ENCODE measurements at regions of chr1 and their contacts with region 1.

Region 1: DNA sequence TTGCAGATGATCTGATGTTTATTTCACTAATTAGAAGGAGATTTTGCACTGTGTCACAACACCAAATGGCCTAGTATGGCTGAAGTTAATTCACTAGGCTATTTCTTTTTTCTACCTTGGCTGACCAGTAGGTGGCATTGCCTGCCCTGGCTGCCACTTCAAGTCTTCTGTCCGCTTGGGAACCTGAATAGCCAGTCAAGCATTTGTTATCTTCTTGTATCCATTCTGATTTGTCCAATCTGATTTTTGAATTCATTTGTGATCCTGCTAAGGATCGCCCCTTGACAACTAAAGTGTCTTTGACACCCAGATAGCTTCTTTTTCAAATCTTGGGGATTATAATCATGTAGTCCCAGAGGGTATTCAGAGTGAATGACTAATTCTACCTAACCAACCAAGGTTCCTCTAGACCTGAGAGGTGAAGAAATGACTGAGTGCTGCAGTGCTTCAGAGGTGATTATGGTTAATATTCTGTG is 99.4 kb downstream of the GIPC2 start:
- DNase-seq: peak; percentile 50
- H3K4me3 Mint-ChIP-seq: no peak overlapping the region
- H3K27ac Mint-ChIP-seq: no peak overlapping the region
- H3K4me1 Mint-ChIP-seq: peaks cover 16% of the 10 kb centered on the region
- H3K27me3 Mint-ChIP-seq: no peaks in the 10 kb centered on the region

Region 2: DNA sequence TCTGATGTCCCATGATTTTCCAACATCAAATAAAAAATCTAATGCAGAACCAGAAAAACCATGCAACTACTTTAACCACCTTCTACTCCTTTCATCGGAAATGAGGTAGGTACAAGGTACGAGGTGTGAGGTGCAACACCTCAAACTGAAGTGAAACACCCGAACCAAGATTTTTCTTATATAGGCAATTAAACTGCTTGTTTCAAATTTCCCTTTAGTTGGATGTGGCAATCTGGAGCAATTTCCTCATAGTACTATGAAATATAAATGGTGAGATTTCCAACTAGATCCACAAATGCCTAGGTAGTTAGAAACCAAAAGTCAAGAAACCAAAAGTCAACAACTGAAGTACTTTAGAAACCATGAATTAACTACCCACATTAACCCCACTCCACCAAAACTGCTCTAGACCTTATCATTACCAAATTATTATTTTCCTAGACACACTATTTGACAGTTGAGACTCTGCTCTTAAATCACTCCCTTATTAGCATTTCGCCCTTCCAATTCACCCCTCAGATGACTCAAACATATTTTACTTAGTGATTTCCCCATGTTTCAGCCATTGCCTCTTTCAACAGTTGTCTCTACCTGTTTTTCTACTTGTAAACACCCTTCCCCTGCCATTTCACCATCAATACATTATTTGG is 204.1 kb before region 1 on chr1:
- CTCF ChIA-PET with region 1: no interaction called
- POLR2A ChIA-PET with region 1: no interaction called
- intact Hi-C with region 1: no loop called
- DNase-seq: no peak
- H3K4me3 Mint-ChIP-seq: no peak overlapping the region
- H3K27ac Mint-ChIP-seq: no peak overlapping the region
- H3K4me1 Mint-ChIP-seq: peaks cover 14% of the 10 kb centered on the region
- H3K27me3 Mint-ChIP-seq: no peaks in the 10 kb centered on the region

Region 3: GRCh38 chr1:78132174-78132947 is 12.8 kb before region 1 on chr1:
- CTCF ChIA-PET with region 1: interaction called, 31 read pairs
- POLR2A ChIA-PET with region 1: no interaction called
- intact Hi-C with region 1: no loop called
- DNase-seq: no peak
- H3K4me3 Mint-ChIP-seq: no peak overlapping the region
- H3K27ac Mint-ChIP-seq: no peak overlapping the region
- H3K4me1 Mint-ChIP-seq: no peaks in the 10 kb centered on the region
- H3K27me3 Mint-ChIP-seq: no peaks in the 10 kb centered on the region

Region 4: DNA sequence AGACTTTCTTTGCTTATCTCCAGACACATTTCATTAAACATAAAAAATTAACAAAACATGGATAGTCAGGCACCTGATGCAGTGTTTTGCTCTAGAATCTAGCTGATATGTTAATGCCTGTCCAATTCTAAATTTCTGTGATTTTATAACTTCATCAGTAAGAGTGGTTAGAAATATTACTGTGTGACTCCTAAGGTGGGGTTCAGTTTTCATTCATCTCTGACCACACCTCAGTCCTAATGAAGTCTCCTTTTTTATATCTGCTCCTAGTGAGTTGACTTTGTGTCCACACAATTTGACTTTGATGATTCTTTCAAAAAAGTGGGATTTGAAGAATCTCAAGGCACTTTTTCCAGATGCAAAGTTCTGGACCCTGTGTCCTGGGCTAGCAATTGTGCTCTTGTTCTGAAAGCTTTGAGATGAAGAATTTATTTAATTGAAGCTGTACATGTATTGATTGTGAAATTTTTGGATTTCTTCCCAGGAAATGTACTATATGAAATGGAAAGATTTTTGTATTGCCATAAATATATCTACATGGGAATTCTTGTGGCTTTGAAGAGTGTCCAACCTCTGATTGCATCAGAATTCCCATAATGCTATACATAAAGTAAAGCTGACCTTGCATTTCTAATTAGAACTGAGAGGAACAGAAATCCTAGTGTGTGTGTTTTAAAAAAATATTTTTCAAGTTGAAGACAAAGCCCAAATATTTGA is 11.8 kb after region 1 on chr1:
- CTCF ChIA-PET with region 1: interaction called, 12 read pairs
- POLR2A ChIA-PET with region 1: no interaction called
- intact Hi-C with region 1: no loop called
- DNase-seq: no peak
- H3K4me3 Mint-ChIP-seq: no peak overlapping the region
- H3K27ac Mint-ChIP-seq: no peak overlapping the region
- H3K4me1 Mint-ChIP-seq: no peaks in the 10 kb centered on the region
- H3K27me3 Mint-ChIP-seq: peaks cover 11% of the 10 kb centered on the region

Region 5: DNA sequence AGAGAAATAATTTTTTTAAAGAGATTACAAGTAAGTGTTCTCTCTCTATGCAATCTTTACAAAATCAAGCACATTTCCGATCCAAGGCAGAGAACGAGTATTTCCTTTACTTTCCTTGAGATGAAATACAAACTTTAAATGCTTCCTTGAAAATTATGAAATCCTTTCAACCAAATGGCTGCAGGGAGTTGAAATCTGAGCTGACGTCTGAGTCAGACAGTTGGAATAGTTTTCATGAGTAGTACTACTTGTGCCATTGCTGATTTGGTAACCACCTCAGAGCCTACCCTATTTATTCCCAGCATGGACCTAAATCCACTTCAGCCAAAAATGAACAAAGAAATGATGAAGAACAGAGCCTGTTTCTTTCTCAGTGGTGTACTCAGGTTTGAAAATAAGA is 84.2 kb after region 1 on chr1:
- CTCF ChIA-PET with region 1: no interaction called
- POLR2A ChIA-PET with region 1: no interaction called
- intact Hi-C with region 1: no loop called
- DNase-seq: no peak
- H3K4me3 Mint-ChIP-seq: no peak overlapping the region
- H3K27ac Mint-ChIP-seq: no peak overlapping the region
- H3K4me1 Mint-ChIP-seq: no peaks in the 10 kb centered on the region
- H3K27me3 Mint-ChIP-seq: no peaks in the 10 kb centered on the region

Region 6: DNA sequence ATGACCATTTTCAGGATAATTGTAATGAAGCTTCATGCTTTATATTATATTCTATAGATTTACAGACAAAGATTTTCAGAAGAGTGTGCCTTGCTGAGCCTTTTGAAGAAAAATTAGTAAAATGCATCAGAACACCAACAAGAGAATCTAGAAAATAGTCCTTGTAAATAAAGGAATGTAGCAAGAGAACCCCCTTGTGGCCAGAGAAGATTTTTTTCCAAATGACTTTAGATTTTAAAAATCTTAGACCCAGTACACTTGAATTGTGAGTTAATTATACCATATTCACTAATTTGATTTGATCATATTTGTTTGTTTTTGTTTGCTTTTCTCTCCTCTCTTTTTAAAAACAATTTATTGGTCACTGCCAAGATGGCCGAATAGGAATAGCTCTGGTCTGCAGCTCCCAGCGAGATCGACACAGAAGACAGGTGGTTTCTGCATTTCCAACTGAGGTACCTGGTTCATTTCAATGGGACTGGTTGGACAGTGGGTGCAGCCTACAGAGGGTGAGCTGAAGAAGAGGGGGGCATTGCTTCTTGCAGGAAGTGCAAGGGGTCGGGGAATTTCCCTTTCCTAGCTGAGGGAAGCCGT is 462.3 kb after region 1 on chr1:
- CTCF ChIA-PET with region 1: interaction called, 18 read pairs
- POLR2A ChIA-PET with region 1: no interaction called
- intact Hi-C with region 1: loop called (anchors 1 kb)
- DNase-seq: no peak
- H3K4me3 Mint-ChIP-seq: no peak overlapping the region
- H3K27ac Mint-ChIP-seq: no peak overlapping the region
- H3K4me1 Mint-ChIP-seq: no peaks in the 10 kb centered on the region
- H3K27me3 Mint-ChIP-seq: peaks cover 7% of the 10 kb centered on the region

Region 7: GRCh38 chr1:78676347-78676982 is 531.3 kb after region 1 on chr1:
- CTCF ChIA-PET with region 1: interaction called, 6 read pairs
- POLR2A ChIA-PET with region 1: no interaction called
- intact Hi-C with region 1: loop called (anchors 1 kb)
- DNase-seq: peak; percentile 44
- H3K4me3 Mint-ChIP-seq: no peak overlapping the region
- H3K27ac Mint-ChIP-seq: no peak overlapping the region
- H3K4me1 Mint-ChIP-seq: peaks cover 5% of the 10 kb centered on the region
- H3K27me3 Mint-ChIP-seq: peaks cover 1% of the 10 kb centered on the region

Measured in activated CD4-positive, alpha-beta memory T cell treated with anti-CD3 and anti-CD28 coated beads for 36 hours (primary cell).